ENCODE measurements at regions of chr4 and their contacts with region 1.

Region 1: GRCh38 chr4:77862478-77863216 is at the start of gene MRPL1:
- DNase-seq: peak; percentile 81
- ATAC-seq: peak; percentile 84
- H3K4me3 Mint-ChIP-seq: peak within 1 kb of the TSS; percentile 98
- H3K27ac Mint-ChIP-seq: peak within 1 kb of the TSS; percentile 97
- H3K4me1 Mint-ChIP-seq: peaks cover 34% of the 10 kb centered on the region
- H3K27me3 Mint-ChIP-seq: no peaks in the 10 kb centered on the region
- total RNA-seq, gene MRPL1: 21.4 to 29.6 TPM

Region 2: GRCh38 chr4:76920715-76921114 is 941.9 kb before region 1 on chr4:
- POLR2A ChIA-PET with region 1: no interaction called
- DNase-seq: no peak
- ATAC-seq: no peak
- H3K4me3 Mint-ChIP-seq: no peak overlapping the region
- H3K27ac Mint-ChIP-seq: no peak overlapping the region
- H3K4me1 Mint-ChIP-seq: no peaks in the 10 kb centered on the region
- H3K27me3 Mint-ChIP-seq: peaks cover 3% of the 10 kb centered on the region

Region 3: DNA sequence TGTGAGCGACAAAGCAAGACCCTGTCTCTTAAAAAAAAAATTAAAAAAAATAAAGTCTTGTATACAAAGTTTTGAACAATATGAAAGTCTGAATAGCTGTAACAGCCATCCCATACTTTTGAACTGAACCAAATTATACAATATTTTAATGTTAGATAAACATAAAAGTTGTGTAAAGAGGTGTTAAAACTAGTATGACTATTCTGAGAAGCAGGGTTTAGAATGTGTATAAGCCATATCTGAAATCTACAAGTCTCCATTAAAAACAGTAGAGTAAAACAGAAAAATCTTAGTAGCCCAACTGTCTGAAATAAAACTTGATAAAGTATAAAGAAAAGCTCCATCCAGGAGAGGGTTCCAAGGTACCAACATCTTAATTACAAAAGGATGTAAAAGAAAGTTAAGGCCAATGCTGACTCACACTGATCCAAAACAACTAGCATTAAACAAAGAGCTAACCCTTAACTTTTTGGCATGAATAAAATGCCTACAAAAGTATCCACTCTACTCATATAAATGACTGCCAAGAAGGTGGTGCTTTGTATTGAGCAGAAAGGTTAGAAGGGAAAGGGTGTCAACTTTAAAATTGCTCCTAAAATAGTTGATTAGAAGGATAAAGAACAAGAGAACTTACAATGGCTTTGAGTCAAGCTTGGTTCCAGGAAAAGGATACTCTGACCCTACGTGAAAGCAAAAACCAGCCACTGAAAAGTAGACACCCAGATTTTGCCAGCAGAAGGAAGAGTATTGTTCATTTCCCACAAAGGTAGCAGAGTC is 62.0 kb before region 1 on chr4:
- POLR2A ChIA-PET with region 1: interaction called, 11 read pairs
- DNase-seq: no peak
- ATAC-seq: peak; percentile 61
- H3K4me3 Mint-ChIP-seq: peak overlapping the region; percentile 79
- H3K27ac Mint-ChIP-seq: peak overlapping the region; percentile 87
- H3K4me1 Mint-ChIP-seq: peaks cover 34% of the 10 kb centered on the region
- H3K27me3 Mint-ChIP-seq: no peaks in the 10 kb centered on the region

Region 4: DNA sequence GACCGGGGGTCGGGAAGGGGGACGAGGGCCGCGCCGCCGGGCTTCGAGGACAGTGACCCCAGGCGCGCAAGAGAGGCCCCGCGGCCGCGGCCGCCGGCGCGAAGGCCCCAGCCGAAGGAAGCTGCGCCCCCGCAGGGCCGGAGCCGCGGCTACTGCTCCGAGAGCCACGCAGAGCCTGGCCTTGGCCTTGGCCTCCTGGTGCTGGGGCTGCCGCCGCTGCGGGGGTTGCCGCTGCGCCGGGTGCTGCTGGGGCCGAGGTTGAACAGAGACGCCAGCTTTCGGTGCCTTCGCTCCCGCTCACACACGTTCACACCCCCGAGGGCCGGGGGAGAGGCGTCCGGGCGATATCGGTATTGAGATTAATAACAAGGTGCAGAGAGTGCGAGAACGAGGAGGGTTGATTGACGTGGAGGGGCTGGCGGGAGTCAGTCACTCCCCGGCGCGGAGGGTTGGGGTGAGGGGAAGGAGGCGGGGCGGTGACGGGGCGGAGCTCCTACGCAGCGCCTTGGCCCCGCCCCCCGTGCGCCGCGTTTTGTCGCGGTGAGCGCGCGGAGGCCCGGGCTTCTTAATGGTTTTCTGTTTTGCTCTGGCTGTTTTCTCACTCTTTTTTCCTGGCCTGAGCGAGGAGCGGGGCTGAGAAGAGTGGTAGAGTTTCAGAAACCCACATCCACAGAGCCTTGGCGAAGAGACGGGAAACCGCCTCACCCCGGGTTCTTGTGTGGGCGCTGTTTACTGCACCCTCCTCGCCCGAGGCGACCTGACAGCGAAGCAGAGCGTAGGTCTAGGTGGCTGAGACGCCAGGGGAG is 42.6 kb before region 1 on chr4:
- POLR2A ChIA-PET with region 1: interaction called, 330 read pairs
- DNase-seq: peak; percentile 98
- ATAC-seq: peak; percentile 76
- H3K4me3 Mint-ChIP-seq: peak overlapping the region; percentile 91
- H3K27ac Mint-ChIP-seq: peak overlapping the region; percentile 90
- H3K4me1 Mint-ChIP-seq: peaks cover 41% of the 10 kb centered on the region
- H3K27me3 Mint-ChIP-seq: no peaks in the 10 kb centered on the region

Region 5: GRCh38 chr4:77827343-77827742 is 35.3 kb before region 1 on chr4:
- POLR2A ChIA-PET with region 1: interaction called, 330 read pairs
- DNase-seq: no peak
- ATAC-seq: peak; percentile 85
- H3K4me3 Mint-ChIP-seq: peak overlapping the region; percentile 52
- H3K27ac Mint-ChIP-seq: peak overlapping the region; percentile 79
- H3K4me1 Mint-ChIP-seq: peaks cover 25% of the 10 kb centered on the region
- H3K27me3 Mint-ChIP-seq: no peaks in the 10 kb centered on the region